Aorta (tissue), 5 donors: ENCODE measurements at regions of chr1 and their contacts with region 1.

Region 1: DNA sequence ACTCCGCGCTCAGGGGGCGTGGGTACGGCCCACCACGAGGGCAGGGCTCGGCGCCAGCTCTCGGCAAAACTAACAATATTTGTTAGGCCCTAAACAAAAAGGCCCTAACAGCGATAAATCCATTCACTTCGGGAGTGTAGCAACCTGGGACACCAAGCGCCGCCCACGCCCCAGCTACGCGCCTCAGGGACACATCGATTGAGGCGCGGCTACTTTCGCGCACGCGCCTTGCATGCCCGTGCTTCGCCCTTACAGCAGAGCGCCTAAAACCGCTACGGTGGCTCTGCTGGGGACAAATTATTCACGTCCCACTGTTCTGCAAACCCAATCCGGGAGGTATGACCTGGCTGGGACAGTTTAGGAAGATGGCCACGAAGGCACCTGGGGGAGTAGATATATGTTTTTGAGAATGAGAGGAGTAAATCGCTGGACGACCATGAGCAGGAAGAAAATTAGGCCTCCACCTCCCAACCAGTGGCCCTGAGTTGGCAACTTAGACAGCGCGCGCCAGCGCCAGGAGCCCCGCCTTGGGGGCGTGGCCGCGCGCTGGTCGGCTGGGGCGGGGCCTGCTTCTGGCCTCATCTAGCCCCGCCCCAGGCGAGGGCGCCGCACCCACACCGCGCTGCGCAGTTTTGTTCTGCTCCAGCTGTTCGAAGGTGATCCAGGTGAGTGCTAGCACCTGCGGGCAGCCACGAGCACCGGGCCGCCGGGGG is at the start of gene MGST3:
- DNase-seq: peak; percentile 95 to 98
- ATAC-seq: peak; percentile 98
- H3K4me3 ChIP-seq: peak within 1 kb of the TSS; percentile 84 to 93
- H3K27ac ChIP-seq: peak within 1 kb of the TSS; percentile 33 to 92
- H3K4me1 ChIP-seq: no peaks in the 10 kb centered on the region
- H3K27me3 ChIP-seq: no peaks in the 10 kb centered on the region
- total RNA-seq, gene MGST3: 199 to 230 TPM

Region 2: DNA sequence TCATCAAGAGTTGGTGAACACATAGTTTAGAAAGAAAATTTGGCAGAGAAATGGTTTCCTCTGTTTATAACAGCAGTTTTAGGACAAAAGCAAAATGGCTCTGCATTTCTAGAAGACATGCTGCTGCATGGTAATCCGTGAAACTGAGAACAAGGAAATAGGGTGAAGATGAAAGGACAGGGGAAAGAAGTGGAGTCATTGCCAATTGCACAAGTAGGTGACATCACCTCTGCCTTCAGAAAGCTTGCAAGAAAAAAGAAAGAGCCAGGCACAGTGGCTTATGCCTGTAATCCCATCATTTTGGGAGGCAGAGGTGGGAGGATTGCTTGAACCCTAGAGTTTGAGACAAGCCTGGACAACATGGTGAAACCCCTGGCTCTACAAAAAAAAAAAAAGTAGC is 491.8 kb before region 1 on chr1:
- intact Hi-C with region 1: no loop called
- DNase-seq: no peak
- ATAC-seq: no peak
- H3K4me3 ChIP-seq: no peak overlapping the region
- H3K27ac ChIP-seq: no peak overlapping the region
- H3K4me1 ChIP-seq: no peaks in the 10 kb centered on the region
- H3K27me3 ChIP-seq: no peaks in the 10 kb centered on the region

Region 3: GRCh38 chr1:165697881-165698760 is 67.3 kb after region 1 on chr1 and contains the start of gene ALDH9A1:
- intact Hi-C with region 1: loop called in 1 of 2 experiments (anchors 2 kb)
- DNase-seq: peak; percentile 94 to 96
- ATAC-seq: peak; percentile 96
- H3K4me3 ChIP-seq: peak within 1 kb of the TSS; percentile 72 to 91
- H3K27ac ChIP-seq: peak within 1 kb of the TSS; percentile 72 to 73
- H3K4me1 ChIP-seq: no peaks in the 10 kb centered on the region
- H3K27me3 ChIP-seq: no peaks in the 10 kb centered on the region
- total RNA-seq, gene ALDH9A1: 36.5 to 54.3 TPM

Region 4: DNA sequence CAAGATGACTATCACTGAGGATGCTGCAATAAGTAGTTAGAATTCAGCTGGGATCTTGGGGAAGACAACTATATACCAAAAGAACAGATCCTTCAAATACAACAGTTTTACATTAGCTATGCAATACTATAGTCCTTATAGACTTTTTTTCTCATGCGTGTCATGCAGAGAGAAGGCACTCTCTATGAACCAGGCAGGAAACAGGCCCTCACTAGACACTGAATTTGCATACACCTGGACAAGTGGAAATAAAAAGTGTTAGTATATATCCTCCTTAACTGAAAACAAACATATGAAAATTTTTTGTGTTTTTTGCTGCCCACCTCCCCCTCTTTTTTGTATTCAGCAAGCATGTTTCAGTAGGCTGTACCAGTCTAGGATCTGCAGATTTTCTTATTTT is 108.0 kb after region 1 on chr1:
- intact Hi-C with region 1: no loop called
- DNase-seq: no peak
- ATAC-seq: no peak
- H3K4me3 ChIP-seq: no peak overlapping the region
- H3K27ac ChIP-seq: no peak overlapping the region
- H3K4me1 ChIP-seq: no peaks in the 10 kb centered on the region
- H3K27me3 ChIP-seq: no peaks in the 10 kb centered on the region

Region 5: DNA sequence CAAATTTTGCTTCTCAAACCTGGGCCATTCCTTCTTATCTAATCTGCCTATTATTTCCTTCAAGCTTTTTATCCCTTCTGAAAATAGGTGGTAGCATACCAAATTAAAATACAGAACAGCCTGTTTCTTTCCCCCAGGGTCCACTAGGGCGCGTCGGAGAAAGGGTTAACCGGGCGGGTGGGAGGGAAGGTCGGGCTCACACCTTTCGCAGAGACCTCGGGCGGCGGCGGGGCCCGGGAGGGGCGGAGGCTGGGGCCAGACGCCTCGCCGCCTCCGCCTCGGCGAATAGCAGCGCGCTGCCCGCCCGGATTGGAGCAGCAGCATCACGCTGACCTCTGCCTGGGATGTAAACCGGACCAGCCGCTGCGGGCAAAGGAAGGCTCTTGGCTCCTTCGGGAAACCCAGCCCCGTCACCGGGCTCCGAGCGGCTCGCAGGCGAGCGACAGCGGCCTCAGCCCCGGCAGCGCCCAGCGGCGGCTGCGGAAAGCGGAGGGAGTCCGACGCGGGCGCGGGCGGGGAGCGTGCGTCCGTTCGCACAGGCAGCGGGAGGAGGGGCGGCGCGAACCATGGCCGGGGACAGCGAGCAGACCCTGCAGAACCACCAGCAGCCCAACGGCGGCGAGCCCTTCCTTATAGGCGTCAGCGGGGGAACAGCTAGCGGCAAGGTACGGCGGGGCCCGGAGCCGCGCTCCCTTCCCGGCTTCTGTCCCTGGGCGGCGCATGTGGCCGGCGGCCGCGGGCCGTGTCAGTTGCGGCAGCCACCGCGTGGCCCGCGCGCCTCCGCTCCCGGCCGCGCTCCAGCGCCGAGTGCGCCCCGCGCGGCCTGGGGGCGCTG is 196.7 kb after region 1 on chr1 and contains the start of gene UCK2:
- intact Hi-C with region 1: loop called in 1 of 2 experiments (anchors 5 kb)
- DNase-seq: peak; percentile 84 to 94
- ATAC-seq: peak; percentile 90
- H3K4me3 ChIP-seq: peak within 1 kb of the TSS; percentile 69 to 75
- H3K27ac ChIP-seq: peak within 1 kb of the TSS; percentile 72 to 88
- H3K4me1 ChIP-seq: no peaks in the 10 kb centered on the region
- H3K27me3 ChIP-seq: no peaks in the 10 kb centered on the region
- total RNA-seq, gene UCK2: 27.2 to 31.1 TPM

Region 6: GRCh38 chr1:165898837-165899236 is 268.1 kb after region 1 on chr1:
- intact Hi-C with region 1: loop called in 1 of 2 experiments (anchors 2 kb)
- DNase-seq: peak; percentile 79 to 85
- ATAC-seq: peak; percentile 68
- H3K4me3 ChIP-seq: no peak overlapping the region
- H3K27ac ChIP-seq: peak overlapping the region; percentile 90 to 100
- H3K4me1 ChIP-seq: peaks cover 0 to 4% of the 10 kb centered on the region in 2 donors
- H3K27me3 ChIP-seq: no peaks in the 10 kb centered on the region